IMR-90 (cell line): ENCODE measurements at regions of chr11 and their contacts with region 1.

Region 1: DNA sequence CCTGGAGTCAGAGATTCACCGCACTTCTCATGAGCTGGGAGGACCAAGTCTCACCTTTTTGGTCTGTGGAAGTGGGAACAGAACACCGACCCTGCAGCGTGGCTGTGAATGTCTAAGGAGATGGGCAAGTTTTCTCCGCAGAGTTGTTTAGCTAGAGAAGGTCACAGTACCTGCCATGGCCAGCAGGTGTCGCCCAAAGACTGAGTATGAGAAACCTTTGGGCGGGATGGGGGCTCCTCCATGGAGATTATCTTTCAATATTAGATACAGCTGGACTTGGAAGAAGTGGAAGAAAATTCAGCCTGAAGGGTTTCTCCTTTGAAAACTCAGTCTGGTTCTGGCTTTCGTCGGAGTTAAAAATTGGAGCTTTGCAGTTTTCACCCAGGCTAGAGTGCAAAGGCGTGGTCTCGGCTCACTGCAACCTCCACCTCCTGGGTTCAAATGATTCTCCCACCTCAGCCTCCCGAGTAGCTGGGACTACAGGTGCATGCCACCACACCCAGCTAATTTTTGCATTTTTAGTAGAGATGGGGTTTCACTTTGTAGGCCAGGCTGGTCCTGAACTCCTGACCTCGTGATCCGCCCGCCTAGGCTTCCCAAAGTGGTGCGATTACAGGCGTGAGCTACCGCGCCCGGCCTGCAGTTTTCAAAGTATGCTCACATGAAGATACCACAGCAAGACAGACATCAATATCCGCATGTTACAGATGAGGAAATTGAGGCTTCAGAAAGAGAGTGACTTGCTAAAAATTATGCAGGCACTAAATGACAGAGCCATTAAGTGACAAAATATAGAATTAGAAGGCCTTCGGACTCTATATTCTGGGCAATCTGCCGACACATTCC is 10.7 kb upstream of the DSCAML1 start:
- DNase-seq: peak; percentile 51
- ATAC-seq: peak; percentile 91
- H3K4me3 ChIP-seq: no peak overlapping the region
- H3K27ac ChIP-seq: no peak overlapping the region
- H3K4me1 ChIP-seq: no peaks in the 10 kb centered on the region
- H3K27me3 ChIP-seq: peaks cover 26% of the 10 kb centered on the region
- CTCF ChIP-seq: peak; percentile 87
- POLR2A ChIP-seq: no peak
- RAD21 ChIP-seq: peak; percentile 86

Region 2: DNA sequence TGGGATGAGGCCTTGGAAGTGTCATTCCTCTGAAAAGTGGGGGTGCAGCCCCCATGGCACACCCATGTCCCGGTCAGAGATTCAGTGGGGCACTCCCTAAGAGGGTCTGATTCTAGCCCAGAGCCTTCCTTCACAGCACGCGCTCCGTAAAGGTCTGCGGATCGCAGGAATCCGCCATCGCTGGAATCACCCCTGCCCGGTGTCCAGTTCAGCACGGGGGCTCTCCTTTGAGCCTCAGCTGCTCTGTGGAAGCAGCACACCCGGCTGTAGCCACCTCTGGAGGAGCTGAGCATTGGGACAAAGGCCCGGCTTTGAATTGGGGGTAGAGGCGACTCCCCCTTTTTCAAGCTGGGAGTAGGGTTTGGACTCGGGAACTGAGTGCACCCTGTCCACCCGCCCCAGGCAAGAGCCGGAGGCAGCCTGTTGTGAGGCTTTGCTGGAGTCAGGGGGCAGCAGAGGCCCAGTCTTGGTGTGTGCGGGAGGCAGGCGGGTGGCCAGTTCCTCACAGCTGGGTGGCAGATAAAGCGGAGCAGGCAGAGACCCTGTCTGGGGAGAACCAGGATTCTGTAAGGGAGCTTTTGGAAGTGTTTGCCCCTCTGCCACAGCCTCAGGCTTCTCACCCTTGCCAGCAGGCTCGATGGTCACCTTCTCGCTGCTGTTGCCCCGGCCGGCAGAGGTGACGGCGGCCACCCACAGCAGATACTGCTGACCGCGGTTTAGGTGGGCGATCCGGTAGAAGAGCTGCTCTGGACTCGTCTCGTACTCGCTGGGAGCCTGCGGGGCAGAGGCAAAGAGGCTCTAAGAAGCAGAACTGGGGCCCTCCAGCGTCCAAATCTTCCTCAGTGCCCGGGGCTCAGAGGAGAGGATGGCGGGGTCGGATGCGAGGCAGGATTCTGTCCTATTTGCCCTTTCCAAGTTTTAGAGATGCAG is 364.2 kb before region 1 on chr11:
- CTCF ChIA-PET with region 1: no interaction called
- POLR2A ChIA-PET with region 1: no interaction called
- dilution Hi-C with region 1: no loop called
- in situ Hi-C with region 1: loop called (anchors 10 kb)
- intact Hi-C with region 1: no loop called
- DNase-seq: peak; percentile 30
- ATAC-seq: peak; percentile 86
- H3K4me3 ChIP-seq: no peak overlapping the region
- H3K27ac ChIP-seq: no peak overlapping the region
- H3K4me1 ChIP-seq: no peaks in the 10 kb centered on the region
- H3K27me3 ChIP-seq: peaks cover 48% of the 10 kb centered on the region
- CTCF ChIP-seq: peak; percentile 60
- POLR2A ChIP-seq: no peak
- RAD21 ChIP-seq: peak; percentile 64

Region 3: GRCh38 chr11:117795638-117796455 is 11.9 kb before region 1 on chr11:
- CTCF ChIA-PET with region 1: no interaction called
- POLR2A ChIA-PET with region 1: no interaction called
- dilution Hi-C with region 1: no loop called
- in situ Hi-C with region 1: no loop called
- intact Hi-C with region 1: no loop called
- DNase-seq: no peak
- ATAC-seq: no peak
- H3K4me3 ChIP-seq: no peak overlapping the region
- H3K27ac ChIP-seq: no peak overlapping the region
- H3K4me1 ChIP-seq: no peaks in the 10 kb centered on the region
- H3K27me3 ChIP-seq: peaks cover 55% of the 10 kb centered on the region
- CTCF ChIP-seq: no peak
- POLR2A ChIP-seq: no peak
- RAD21 ChIP-seq: no peak

Region 4: DNA sequence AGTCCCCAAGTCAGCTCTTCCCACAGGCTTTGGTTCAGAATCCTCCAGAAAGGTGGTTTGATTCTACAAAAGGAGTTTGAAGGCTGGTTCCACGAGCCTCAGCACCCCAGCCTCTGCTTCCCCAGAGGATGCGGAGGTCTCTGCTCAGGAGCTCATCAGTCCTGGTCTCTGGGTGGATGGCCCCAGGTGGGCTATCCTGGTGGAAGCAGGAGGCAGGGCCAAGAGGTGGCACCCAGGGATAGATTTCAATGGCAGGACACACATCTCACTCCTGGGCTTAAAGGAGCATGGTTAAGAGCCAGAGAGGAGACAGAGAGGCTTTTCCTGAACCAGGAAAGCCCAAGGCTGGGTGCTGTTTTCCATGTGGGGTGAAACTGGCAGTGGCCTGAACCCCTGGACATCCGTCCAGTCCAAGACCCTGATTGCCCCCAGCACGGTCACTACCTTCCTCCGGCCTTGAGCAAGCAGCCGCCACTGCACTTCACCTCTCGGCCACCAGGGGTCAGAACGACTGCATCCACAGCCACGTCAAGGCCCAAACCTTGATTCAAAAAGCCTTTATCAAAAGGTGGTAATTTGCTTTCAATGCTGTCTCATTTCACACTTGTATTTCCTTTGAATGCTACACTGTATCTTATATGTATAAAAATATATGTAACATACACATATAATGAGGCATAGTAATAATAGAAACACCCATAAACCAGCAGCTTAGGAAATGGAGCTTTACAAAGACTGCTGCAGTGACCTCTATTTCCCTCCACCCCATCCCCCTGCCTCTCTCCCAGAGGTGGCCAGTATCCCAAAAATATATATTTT is 36.2 kb after region 1 on chr11:
- CTCF ChIA-PET with region 1: no interaction called
- POLR2A ChIA-PET with region 1: no interaction called
- dilution Hi-C with region 1: no loop called
- in situ Hi-C with region 1: no loop called
- intact Hi-C with region 1: loop called (anchors 1 kb)
- DNase-seq: peak; percentile 59
- ATAC-seq: peak; percentile 97
- H3K4me3 ChIP-seq: no peak overlapping the region
- H3K27ac ChIP-seq: no peak overlapping the region
- H3K4me1 ChIP-seq: no peaks in the 10 kb centered on the region
- H3K27me3 ChIP-seq: peaks cover 8% of the 10 kb centered on the region; the same call in 1 of the 2 replicates
- CTCF ChIP-seq: peak; percentile 91
- POLR2A ChIP-seq: no peak
- RAD21 ChIP-seq: peak; percentile 73

Region 5: DNA sequence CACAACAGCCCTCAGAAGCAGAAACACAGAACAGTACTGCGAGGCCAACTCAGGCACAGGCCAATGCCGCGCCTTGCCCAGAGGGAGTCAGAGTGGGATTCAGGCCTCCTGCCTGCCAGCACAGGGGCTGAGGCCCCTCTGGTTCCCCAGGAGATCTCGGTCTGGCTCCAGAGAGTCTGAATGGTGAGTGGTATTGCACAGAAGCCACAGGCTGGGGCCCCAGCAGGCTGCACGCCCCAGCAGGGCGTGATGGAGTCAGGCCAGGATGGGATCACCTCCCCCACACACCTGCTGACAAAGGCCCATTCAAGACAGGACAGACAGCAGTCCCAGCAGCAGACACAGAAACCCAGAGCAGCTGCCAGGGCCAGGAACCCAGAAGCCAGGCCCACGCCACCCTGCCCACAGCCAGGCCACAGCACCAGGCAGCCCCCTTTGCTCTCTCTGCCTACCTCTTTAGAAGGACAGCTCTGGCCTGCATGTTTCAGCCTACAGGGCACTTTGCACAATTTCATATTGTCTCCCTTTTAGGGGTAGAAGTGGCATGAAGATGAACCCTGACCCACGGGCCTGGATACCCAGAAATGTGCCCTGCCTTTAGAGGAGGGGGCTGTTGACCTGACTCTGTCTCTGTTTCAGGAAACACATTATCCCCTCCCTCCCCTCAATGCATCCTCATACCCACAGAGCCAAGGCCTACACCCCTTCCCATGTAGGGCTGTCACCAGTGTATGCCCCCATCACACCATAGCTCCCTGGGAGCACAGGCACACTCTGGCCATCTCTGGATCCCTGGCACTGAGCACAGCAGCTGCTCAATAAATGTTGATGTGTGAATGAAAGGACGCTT is 62.6 kb after region 1 on chr11:
- CTCF ChIA-PET with region 1: no interaction called
- POLR2A ChIA-PET with region 1: no interaction called
- dilution Hi-C with region 1: no loop called
- in situ Hi-C with region 1: no loop called
- intact Hi-C with region 1: no loop called
- DNase-seq: no peak
- ATAC-seq: no peak
- H3K4me3 ChIP-seq: no peak overlapping the region
- H3K27ac ChIP-seq: no peak overlapping the region
- H3K4me1 ChIP-seq: no peaks in the 10 kb centered on the region
- H3K27me3 ChIP-seq: peaks cover 33% of the 10 kb centered on the region
- CTCF ChIP-seq: no peak
- POLR2A ChIP-seq: no peak
- RAD21 ChIP-seq: no peak

Region 6: DNA sequence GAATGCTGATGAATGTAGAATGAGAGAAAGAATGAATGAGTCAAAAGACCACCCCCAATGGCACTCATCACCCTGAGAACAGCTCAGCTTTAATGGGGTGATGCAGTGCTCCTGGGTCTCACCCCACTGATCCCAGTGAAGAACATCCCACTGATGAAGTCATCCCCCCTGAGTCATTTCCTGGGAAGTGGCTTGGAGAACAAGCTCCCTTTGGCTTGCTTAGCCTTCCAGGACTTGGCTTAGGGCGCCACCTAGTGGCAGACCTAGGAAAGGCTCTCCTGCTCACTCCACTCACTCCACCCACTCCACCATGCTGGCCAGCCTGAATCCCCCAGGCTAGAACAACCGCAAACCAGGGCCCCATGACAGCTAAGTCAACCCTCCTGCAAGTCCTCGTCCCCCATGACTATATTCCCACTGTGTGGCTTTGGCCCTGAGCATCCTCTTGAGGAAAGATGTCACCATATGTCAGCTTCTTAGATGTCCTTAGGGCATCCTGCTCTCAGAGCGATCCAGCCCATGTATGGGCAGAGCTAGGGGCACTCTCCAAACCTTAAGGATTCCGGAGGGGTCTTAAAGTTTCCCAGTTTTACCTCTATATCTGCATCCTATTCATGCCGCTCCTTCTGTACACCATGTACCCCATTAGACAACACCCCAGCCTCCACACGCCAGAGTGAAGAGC is 139.3 kb after region 1 on chr11:
- CTCF ChIA-PET with region 1: interaction called, 23 read pairs
- POLR2A ChIA-PET with region 1: no interaction called
- dilution Hi-C with region 1: no loop called
- in situ Hi-C with region 1: no loop called
- intact Hi-C with region 1: loop called (anchors 1 kb)
- DNase-seq: peak; percentile 91
- ATAC-seq: peak; percentile 97
- H3K4me3 ChIP-seq: no peak overlapping the region
- H3K27ac ChIP-seq: no peak overlapping the region
- H3K4me1 ChIP-seq: no peaks in the 10 kb centered on the region
- H3K27me3 ChIP-seq: peaks cover 7% of the 10 kb centered on the region; the same call in 1 of the 2 replicates
- CTCF ChIP-seq: peak; percentile 98
- POLR2A ChIP-seq: peak; percentile 54; the same call in 1 of the 2 replicates
- RAD21 ChIP-seq: peak; percentile 99

Region 7: DNA sequence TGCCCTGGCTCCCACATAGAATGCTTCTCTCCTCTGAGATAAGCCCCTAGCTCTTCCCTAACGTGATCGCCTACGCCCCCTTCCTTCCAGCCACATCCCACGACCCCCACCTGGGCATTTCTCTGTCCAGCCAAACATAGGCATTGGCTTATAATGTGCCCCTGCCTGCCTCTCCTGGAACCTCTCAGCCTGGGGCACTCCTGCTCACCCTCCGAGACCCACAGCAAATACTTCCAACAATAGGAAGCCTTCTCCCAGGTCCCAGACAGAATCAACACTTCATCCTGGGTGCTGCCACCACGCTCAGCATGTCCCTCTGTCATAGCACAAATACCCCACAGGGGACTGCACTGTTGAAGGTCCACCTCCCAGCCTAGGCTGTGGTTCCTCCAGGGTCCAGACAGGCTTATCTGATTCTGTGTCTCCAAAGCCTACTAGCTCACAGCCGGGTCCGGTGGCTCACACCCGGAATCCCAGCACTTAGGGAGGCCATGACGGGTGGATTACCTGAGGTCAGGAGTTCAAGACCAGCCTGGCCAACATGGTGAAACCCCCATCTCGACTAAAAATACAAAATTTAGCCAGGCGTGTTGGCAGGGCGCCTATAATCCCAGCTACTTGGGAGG is 245.0 kb after region 1 on chr11:
- CTCF ChIA-PET with region 1: interaction called, 7 read pairs
- POLR2A ChIA-PET with region 1: no interaction called
- dilution Hi-C with region 1: no loop called
- in situ Hi-C with region 1: no loop called
- intact Hi-C with region 1: loop called (anchors 1 kb)
- DNase-seq: no peak
- ATAC-seq: no peak
- H3K4me3 ChIP-seq: no peak overlapping the region
- H3K27ac ChIP-seq: no peak overlapping the region
- H3K4me1 ChIP-seq: no peaks in the 10 kb centered on the region
- H3K27me3 ChIP-seq: peaks cover 10% of the 10 kb centered on the region; the same call in 1 of the 2 replicates
- CTCF ChIP-seq: no peak
- POLR2A ChIP-seq: no peak
- RAD21 ChIP-seq: no peak

Region 8: DNA sequence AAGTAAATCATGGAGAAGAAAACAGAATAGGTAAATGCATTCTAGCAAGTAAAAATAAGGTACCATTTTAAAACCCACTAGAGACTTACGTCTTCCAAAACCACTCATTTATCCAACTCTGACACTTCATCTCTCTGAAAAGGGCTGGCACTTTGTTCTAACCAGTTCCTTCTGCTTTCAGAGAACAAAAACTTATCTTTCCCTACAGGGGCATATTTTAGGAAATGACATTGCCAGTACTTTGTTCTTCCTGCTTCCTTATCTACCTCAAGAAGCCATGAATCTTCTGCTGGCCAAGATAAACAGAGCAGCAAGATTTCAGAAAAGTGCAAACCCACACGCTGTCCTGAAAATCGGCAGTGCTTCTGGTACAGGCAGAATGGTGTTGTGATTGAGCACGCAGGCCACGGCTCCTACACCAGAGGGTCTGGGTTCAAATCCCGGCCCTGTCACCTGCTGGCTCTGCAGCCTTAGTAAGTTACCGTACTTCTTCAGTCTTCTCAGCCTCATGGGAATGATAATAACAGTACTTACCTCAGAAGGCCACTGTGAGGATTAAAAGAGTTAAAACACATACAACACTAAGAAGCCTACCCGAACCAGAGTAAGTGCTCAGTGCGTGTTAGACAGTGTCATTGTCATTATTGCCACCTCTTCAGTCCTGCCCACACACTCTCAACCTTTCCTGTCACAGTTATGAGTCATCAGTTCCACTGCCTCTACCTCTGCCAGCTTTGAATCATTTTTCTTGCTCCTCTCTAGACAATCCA is 433.5 kb after region 1 on chr11:
- CTCF ChIA-PET with region 1: no interaction called
- POLR2A ChIA-PET with region 1: no interaction called
- dilution Hi-C with region 1: no loop called
- in situ Hi-C with region 1: no loop called
- intact Hi-C with region 1: no loop called
- DNase-seq: no peak
- ATAC-seq: no peak
- H3K4me3 ChIP-seq: no peak overlapping the region
- H3K27ac ChIP-seq: no peak overlapping the region
- H3K4me1 ChIP-seq: no peaks in the 10 kb centered on the region
- H3K27me3 ChIP-seq: peaks cover 1% of the 10 kb centered on the region; the same call in 1 of the 2 replicates
- CTCF ChIP-seq: no peak
- POLR2A ChIP-seq: no peak
- RAD21 ChIP-seq: no peak

Region 9: GRCh38 chr11:118998822-118999221 is 1191.1 kb after region 1 on chr11:
- CTCF ChIA-PET with region 1: no interaction called
- POLR2A ChIA-PET with region 1: no interaction called
- dilution Hi-C with region 1: no loop called
- in situ Hi-C with region 1: no loop called
- intact Hi-C with region 1: no loop called
- DNase-seq: peak; percentile 72
- ATAC-seq: no peak
- H3K4me3 ChIP-seq: peak overlapping the region; percentile 83
- H3K27ac ChIP-seq: peak overlapping the region; percentile 64
- H3K4me1 ChIP-seq: peaks cover 7% of the 10 kb centered on the region
- H3K27me3 ChIP-seq: no peaks in the 10 kb centered on the region
- CTCF ChIP-seq: no peak
- POLR2A ChIP-seq: no peak
- RAD21 ChIP-seq: no peak